ENCODE measurements at regions of chr19 and their contacts with region 1.

Region 1: DNA sequence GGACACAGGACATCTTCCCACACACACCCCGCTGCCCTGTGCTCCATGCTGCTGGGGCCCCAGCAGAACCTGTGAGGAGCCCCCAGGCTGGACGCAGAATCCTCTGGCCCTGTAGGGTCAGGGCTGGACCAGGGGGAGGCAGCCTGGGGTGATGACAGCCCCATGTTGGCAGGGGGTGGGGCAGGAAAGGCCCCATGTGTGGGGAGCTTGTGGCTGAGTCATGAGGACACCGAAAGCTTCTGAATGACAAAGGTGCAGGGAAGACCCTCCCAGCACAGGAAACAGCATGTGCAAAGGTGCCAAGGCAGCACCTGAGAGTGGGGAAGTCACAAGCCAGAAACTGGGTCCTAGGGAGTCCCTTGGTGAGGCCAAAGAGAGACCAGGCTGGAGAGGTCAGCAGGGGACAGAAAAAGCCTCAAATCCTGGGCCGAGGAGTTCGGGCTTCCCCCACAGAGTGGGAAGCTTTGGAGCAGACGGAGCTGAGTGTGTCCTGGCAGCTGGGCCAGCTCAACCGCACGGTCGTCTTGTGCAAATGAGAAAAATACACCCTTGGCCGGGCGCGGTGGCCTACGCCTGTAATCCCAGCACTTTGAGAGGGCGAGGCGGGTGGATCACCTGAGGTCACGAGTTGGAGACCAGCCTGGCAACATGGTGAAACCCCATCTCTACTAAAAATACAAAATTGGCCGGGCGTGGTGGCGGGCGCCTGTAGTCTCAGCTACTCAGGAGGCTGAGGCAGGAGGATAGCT is 17.5 kb downstream of the ATP8B3 start:
- DNase-seq: no peak
- ATAC-seq: no peak
- H3K4me3 ChIP-seq: no peak overlapping the region
- H3K27ac ChIP-seq: no peak overlapping the region
- H3K4me1 ChIP-seq: no peaks in the 10 kb centered on the region
- CTCF ChIP-seq: no peak
- EP300 ChIP-seq: no peak
- POLR2A ChIP-seq: no peak
- RAD21 ChIP-seq: no peak

Region 2: DNA sequence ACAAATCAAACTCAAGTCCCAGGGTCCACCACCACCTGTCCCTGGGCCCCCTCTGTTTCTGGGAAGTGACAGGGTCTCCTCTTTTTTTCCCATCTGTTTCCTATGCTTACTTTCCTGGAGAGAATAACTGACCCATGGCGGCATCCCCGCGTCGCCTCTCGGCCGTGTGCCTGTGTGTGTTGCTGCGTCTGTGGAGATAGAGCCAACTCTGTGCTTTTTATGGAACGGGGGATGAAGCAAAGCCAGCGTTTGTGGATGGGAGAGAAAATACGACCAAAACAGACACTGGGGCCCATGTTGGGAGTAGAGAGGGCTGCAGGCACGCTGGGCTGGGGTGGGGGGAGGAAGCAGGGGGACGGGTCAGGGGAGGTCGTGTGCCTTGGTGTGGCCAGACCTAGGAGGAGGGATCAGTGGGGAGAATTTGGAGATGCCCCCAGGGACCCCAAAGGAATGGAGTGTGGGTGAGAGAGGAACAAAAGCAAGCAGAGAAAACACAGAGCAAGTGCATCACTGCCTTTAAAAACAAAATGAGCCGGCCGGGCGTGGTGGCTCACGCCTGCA is 254.2 kb before region 1 on chr19:
- CTCF ChIA-PET with region 1: interaction called, 25 read pairs
- POLR2A ChIA-PET with region 1: no interaction called
- DNase-seq: no peak
- ATAC-seq: no peak
- H3K4me3 ChIP-seq: no peak overlapping the region
- H3K27ac ChIP-seq: no peak overlapping the region
- H3K4me1 ChIP-seq: no peaks in the 10 kb centered on the region
- CTCF ChIP-seq: no peak
- EP300 ChIP-seq: no peak
- POLR2A ChIP-seq: no peak
- RAD21 ChIP-seq: no peak

Region 3: DNA sequence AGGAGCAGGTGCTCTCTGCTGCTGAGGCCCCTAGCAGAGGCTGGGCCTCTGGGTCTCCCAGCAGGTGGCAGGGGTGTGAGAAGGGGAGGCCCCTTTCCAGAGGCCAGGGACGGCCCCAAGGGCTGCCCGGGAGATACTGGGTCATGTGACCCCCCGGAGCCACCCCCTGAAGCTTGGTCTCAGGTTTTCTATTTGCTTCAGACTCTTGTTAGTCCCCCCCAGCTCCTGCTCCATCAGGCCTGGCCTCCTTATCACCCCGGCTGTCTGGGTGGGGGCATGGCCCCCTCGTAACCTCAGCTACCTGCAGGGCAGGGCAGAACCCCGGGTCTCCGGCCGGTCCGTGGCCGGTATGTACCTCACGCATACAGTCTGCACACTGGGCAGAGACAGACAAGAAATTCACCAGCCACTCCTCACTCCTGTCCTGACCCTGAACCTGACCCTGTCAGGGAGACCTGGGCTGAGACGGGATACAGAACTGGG is 129.0 kb before region 1 on chr19:
- CTCF ChIA-PET with region 1: interaction called, 146 read pairs
- POLR2A ChIA-PET with region 1: no interaction called
- DNase-seq: no peak
- ATAC-seq: peak in 1 of 2 experiments; percentile 55; a peak in 2 of 6 replicates
- H3K4me3 ChIP-seq: no peak overlapping the region
- H3K27ac ChIP-seq: no peak overlapping the region
- H3K4me1 ChIP-seq: peaks cover 5% of the 10 kb centered on the region; the same call in 1 of the 3 replicates
- CTCF ChIP-seq: no peak
- EP300 ChIP-seq: no peak
- POLR2A ChIP-seq: no peak
- RAD21 ChIP-seq: no peak

Region 4: GRCh38 chr19:1774999-1775772 is 19.4 kb before region 1 on chr19:
- CTCF ChIA-PET with region 1: interaction called, 90 read pairs
- POLR2A ChIA-PET with region 1: no interaction called
- DNase-seq: no peak
- ATAC-seq: peak; percentile 55 to 84; a peak in 3 of 6 replicates
- H3K4me3 ChIP-seq: no peak overlapping the region
- H3K27ac ChIP-seq: no peak overlapping the region; a peak in 1 of 6 replicates
- H3K4me1 ChIP-seq: no peaks in the 10 kb centered on the region
- CTCF ChIP-seq: peak; percentile 15; the same call in 1 of the 3 replicates
- EP300 ChIP-seq: no peak
- POLR2A ChIP-seq: no peak
- RAD21 ChIP-seq: peak in 1 of 2 experiments; percentile 27; a peak in 1 of 5 replicates

Region 5: GRCh38 chr19:1780272-1780958 is 14.2 kb before region 1 on chr19:
- CTCF ChIA-PET with region 1: interaction called, 90 read pairs
- POLR2A ChIA-PET with region 1: no interaction called
- DNase-seq: peak in 1 of 2 experiments; percentile 53
- ATAC-seq: peak; percentile 66 to 78; a peak in 5 of 6 replicates
- H3K4me3 ChIP-seq: no peak overlapping the region
- H3K27ac ChIP-seq: no peak overlapping the region
- H3K4me1 ChIP-seq: no peaks in the 10 kb centered on the region
- CTCF ChIP-seq: no peak
- EP300 ChIP-seq: no peak
- POLR2A ChIP-seq: no peak
- RAD21 ChIP-seq: no peak; a peak in 1 of 5 replicates

Region 6: DNA sequence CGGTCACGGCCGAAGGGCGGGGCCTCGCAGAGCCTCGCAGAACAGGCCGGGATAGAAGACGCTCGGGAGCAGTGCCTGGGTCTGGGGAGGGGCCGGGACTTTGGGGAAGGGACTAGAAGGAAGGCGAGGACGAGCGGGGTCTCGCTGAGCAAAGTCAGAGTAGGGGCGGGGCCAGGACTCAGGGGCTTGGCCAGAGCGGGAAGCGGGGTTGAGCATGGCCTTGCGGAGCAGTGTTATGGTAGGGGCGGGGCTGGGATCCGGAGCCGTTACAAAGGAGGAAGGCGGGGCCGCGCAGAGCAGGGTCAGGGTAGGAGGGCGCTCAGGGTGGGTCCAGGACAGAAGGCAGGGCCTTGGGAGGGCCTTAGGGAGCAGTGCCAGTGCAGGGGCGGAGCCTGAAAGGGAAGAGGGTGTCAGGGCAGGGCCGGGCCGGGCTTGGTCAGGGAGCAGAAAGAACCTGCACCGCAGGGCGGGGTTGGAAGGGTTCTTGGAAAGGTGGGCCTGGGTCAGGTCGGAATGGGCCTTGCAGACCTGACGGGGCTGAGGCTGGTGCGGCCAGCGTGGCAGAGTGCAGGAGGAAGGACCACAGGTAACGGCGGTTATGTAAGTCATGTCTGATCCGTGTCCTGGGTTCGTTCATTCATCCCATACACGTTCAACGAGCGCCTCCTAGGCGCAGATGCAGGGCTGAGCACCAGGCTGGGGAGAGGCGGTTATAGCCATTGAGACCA is 18.0 kb after region 1 on chr19:
- CTCF ChIA-PET with region 1: interaction called, 17 read pairs
- POLR2A ChIA-PET with region 1: no interaction called
- DNase-seq: peak; percentile 88 to 97
- ATAC-seq: peak; percentile 79 to 91
- H3K4me3 ChIP-seq: peak overlapping the region; percentile 81
- H3K27ac ChIP-seq: peak overlapping the region; percentile 92 to 96
- H3K4me1 ChIP-seq: peaks cover 13% of the 10 kb centered on the region
- CTCF ChIP-seq: peak; percentile 63
- EP300 ChIP-seq: no peak
- POLR2A ChIP-seq: no peak; the same call in 1 of the 2 replicates
- RAD21 ChIP-seq: peak; percentile 75 to 78

Region 7: GRCh38 chr19:1825909-1826556 is 31.4 kb after region 1 on chr19:
- CTCF ChIA-PET with region 1: interaction called, 25 read pairs
- POLR2A ChIA-PET with region 1: no interaction called
- DNase-seq: peak; percentile 62 to 88
- ATAC-seq: peak; percentile 85 to 89
- H3K4me3 ChIP-seq: no peak overlapping the region
- H3K27ac ChIP-seq: peak overlapping the region in 1 of 2 experiments; percentile 51; a peak in 2 of 6 replicates
- H3K4me1 ChIP-seq: peaks cover 10% of the 10 kb centered on the region
- CTCF ChIP-seq: peak; percentile 65
- EP300 ChIP-seq: no peak
- POLR2A ChIP-seq: no peak
- RAD21 ChIP-seq: peak; percentile 62 to 68